GM12878 (cell line): ENCODE measurements at regions of chr15 and their contacts with region 1.

Region 1: DNA sequence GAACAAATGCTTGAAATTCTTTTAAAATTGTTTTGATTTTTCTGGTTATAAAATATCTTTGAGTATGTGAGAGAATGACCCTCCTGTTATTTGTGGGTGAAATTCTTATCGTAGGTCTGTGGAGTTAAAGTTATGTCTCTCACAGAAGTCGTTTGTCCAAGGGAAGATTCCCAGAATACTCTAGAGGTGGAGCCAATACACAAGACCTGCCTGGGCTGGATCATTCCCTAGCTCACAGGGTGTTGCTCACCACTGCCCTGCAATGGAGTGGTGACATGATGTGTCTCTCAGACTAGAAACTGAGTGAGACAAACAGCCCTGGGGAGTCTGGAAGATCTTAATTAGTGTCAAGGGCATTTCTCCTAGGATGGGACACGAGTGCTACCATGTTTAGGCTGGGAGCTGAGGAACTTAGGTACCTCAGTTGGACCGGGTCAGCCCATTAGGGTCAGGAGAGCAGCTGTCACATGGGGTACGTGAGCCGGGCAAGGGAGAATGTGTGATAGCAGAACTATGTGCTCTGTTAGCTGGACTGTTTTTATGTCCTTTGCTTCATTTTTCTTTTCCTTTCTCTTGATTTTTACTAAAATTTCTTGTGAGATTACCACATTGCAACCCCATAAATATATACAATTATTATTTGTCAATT is 53.6 kb upstream of the MYO5C start:
- DNase-seq: no peak
- ATAC-seq: no peak
- H3K4me3 ChIP-seq: no peak overlapping the region
- H3K27ac ChIP-seq: no peak overlapping the region
- H3K4me1 ChIP-seq: no peaks in the 10 kb centered on the region
- H3K27me3 ChIP-seq: no peaks in the 10 kb centered on the region
- CTCF ChIP-seq: no peak
- EP300 ChIP-seq: no peak
- POLR2A ChIP-seq: no peak
- RAD21 ChIP-seq: no peak

Region 2: GRCh38 chr15:52284164-52284563 is 65.0 kb before region 1 on chr15:
- CTCF ChIA-PET with region 1: no interaction called
- POLR2A ChIA-PET with region 1: no interaction called
- RAD21 ChIA-PET with region 1: no interaction called
- SMC1A ChIA-PET with region 1: no interaction called
- in situ Hi-C with region 1: no loop called
- intact Hi-C with region 1: no loop called
- DNase-seq: no peak
- ATAC-seq: peak; percentile 47
- H3K4me3 ChIP-seq: no peak overlapping the region
- H3K27ac ChIP-seq: no peak overlapping the region
- H3K4me1 ChIP-seq: no peaks in the 10 kb centered on the region
- H3K27me3 ChIP-seq: no peaks in the 10 kb centered on the region
- CTCF ChIP-seq: no peak
- EP300 ChIP-seq: no peak
- POLR2A ChIP-seq: no peak
- RAD21 ChIP-seq: no peak

Region 3: GRCh38 chr15:52370010-52370409 is 20.8 kb after region 1 on chr15:
- CTCF ChIA-PET with region 1: interaction called, 4 read pairs
- POLR2A ChIA-PET with region 1: no interaction called
- RAD21 ChIA-PET with region 1: no interaction called
- SMC1A ChIA-PET with region 1: interaction called, 11 read pairs
- in situ Hi-C with region 1: no loop called
- intact Hi-C with region 1: no loop called
- DNase-seq: no peak
- ATAC-seq: peak; percentile 83
- H3K4me3 ChIP-seq: no peak overlapping the region
- H3K27ac ChIP-seq: peak overlapping the region; percentile 5; the same call in 1 of the 2 replicates
- H3K4me1 ChIP-seq: peaks cover 3% of the 10 kb centered on the region; the same call in 1 of the 2 replicates
- H3K27me3 ChIP-seq: no peaks in the 10 kb centered on the region
- CTCF ChIP-seq: no peak
- EP300 ChIP-seq: no peak
- POLR2A ChIP-seq: no peak
- RAD21 ChIP-seq: no peak